ENCODE measurements at regions of chr15 and their contacts with region 1.

Region 1: DNA sequence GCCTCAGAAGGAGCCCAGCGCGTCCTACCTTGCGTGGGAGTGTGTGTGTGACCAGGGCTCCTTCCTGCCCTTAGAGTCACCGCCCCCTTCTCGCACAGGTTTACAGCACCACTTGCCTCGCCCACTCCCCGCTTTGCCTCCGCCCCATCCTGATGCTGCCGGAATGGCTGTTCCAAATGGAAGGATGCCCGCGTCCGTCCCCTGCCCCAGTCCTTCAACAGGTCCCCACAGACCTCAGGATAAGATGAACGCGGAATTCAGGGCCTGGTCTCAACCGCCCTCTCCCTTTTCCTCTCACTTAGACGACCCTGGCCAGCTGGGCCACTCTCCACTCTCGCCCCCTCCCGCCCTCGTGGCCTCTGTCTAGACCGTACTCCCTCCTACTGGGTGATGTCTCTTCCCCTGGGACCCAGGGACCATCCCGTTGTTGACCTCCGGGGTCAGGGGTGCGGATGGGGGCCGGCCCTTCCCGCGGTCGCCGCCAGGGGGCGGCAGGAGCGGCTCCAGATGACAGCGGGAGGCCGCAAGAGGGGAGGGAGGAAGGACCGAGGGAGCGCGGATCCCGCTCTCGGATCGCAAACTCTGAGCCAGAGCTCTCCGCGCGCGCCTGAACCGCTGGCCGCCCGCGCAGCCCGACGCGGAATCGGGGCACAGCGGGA is at the start of gene THSD4:
- DNase-seq: peak; percentile 75 to 92
- ATAC-seq: peak; percentile 84
- H3K4me3 ChIP-seq: peak within 1 kb of the TSS; percentile 48 to 91
- H3K27ac ChIP-seq: peak within 1 kb of the TSS; percentile 82 to 83
- H3K4me1 ChIP-seq: peaks cover 0 to 1% of the 10 kb centered on the region in 2 donors
- H3K27me3 ChIP-seq: no peaks in the 10 kb centered on the region
- total RNA-seq, gene THSD4: 53.8 to 143 TPM

Region 2: GRCh38 chr15:70792171-70792573 is 322.9 kb before region 1 on chr15:
- intact Hi-C with region 1: no loop called
- DNase-seq: no peak
- ATAC-seq: no peak
- H3K4me3 ChIP-seq: no peak overlapping the region
- H3K27ac ChIP-seq: no peak overlapping the region
- H3K4me1 ChIP-seq: no peaks in the 10 kb centered on the region
- H3K27me3 ChIP-seq: no peaks in the 10 kb centered on the region

Region 3: DNA sequence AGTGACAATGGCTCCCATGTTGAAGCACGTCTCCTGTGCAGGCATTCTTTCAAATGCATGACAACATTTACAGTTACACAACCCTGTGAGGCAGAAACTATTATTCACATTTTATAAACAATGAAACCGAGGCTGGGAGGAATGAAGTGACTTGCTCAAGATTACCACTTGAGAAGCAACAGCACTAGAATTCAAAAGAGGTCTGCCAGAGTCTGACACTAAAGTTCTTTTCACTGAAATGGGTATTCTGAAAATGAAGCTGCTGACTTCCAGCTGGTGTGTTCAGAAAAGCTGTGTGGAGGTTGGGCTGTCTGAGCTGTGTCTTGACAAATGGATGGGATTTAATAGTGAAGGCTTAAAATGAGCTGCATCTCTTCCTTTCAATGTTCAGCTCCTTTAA is 104.6 kb after region 1 on chr15:
- intact Hi-C with region 1: loop called (anchors 5 kb)
- DNase-seq: no peak
- ATAC-seq: peak; percentile 34
- H3K4me3 ChIP-seq: no peak overlapping the region
- H3K27ac ChIP-seq: peak overlapping the region in 1 of 2 donors; percentile 81
- H3K4me1 ChIP-seq: peaks cover 5% of the 10 kb centered on the region in 2 donors
- H3K27me3 ChIP-seq: no peaks in the 10 kb centered on the region

Region 4: DNA sequence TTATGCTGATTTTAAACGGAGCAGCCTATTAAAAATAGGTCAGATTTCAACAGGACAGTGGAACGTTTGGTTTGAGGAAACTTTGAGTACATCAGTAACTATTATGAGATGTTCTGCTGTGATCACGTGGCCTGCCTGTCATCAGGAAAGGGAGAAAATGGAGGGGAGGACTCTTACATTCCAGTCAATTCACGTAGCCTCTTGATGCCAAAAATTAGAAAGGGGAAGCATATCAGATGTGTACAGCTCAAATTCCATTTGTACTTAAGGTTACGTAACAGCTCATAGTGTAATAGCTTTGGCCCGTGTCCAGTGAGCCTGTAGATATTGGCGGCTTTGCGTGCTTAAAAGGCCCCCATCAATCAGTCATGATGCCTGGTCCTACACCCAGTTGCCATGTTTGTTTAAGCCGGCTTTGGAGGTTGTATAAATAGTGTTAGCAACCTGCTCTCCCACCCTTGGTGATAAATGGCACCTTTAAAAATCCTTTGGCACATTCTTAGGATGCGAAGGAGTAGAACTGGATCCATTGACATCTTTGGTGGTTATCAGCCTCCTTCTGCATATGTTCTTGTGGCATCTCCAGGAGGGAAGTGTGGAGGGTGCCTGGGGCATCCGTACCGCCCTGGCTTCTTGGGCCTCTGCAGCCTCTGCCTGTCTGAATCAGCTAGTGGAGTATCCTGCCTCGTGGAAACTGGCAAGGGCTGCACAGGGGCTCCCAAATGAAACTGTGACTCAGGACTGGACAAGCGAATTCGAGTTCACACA is 164.1 kb after region 1 on chr15:
- intact Hi-C with region 1: loop called (anchors 5 kb)
- DNase-seq: peak; percentile 77 to 85
- ATAC-seq: peak; percentile 83
- H3K4me3 ChIP-seq: no peak overlapping the region
- H3K27ac ChIP-seq: peak overlapping the region; percentile 72 to 89
- H3K4me1 ChIP-seq: peaks cover 5 to 14% of the 10 kb centered on the region in 2 donors
- H3K27me3 ChIP-seq: no peaks in the 10 kb centered on the region

Region 5: GRCh38 chr15:71329497-71330260 is 214.7 kb after region 1 on chr15:
- intact Hi-C with region 1: loop called (anchors 5 to 10 kb)
- DNase-seq: peak in 1 of 2 donors; percentile 57
- ATAC-seq: peak; percentile 80
- H3K4me3 ChIP-seq: no peak overlapping the region
- H3K27ac ChIP-seq: peak overlapping the region; percentile 98
- H3K4me1 ChIP-seq: peaks cover 5 to 14% of the 10 kb centered on the region in 2 donors
- H3K27me3 ChIP-seq: no peaks in the 10 kb centered on the region

Region 6: DNA sequence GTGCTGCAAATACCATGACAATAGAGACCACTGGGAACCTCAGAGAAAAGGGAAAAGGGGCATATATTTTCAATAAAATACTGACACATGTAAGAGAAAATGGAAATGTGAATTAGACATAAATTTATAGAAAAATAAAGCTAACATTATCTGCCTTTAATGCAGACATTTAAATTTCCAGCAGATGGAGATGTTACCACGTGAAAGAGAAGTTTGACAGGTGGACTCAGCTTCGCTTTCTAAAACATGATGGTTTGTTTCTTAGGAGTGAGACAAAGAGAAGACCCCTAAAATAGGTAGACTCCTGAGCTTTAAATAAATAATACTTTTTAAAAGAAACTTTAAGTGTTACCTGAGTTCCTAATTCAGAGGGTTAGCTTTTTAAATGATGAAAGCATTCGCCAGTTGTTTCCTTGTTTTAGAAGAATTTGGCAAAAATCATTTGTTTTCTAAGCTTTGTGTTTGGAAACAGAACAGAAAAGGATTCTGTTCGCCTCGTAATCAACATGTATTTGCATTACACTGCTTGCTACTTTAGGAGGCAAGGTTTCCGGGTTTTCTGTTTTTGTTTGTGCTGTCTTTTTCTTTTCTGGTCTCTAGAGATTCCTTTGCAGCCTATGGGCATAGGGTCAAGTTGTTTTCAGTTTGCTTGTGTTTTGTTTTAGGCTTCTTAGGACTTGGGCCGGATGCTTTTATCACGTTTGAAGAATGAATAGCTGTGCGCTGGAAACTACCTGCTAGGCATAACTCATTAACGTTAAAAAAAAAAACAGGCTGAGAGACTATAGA is 271.6 kb after region 1 on chr15:
- intact Hi-C with region 1: loop called in 1 of 2 experiments (anchors 5 kb)
- DNase-seq: no peak
- ATAC-seq: no peak
- H3K4me3 ChIP-seq: no peak overlapping the region
- H3K27ac ChIP-seq: no peak overlapping the region
- H3K4me1 ChIP-seq: peaks cover 1 to 12% of the 10 kb centered on the region in 2 donors
- H3K27me3 ChIP-seq: no peaks in the 10 kb centered on the region

Region 7: GRCh38 chr15:71443538-71443937 is 328.5 kb after region 1 on chr15:
- intact Hi-C with region 1: loop called in 1 of 2 experiments (anchors 2 kb)
- DNase-seq: peak; percentile 66 to 87
- ATAC-seq: no peak
- H3K4me3 ChIP-seq: no peak overlapping the region
- H3K27ac ChIP-seq: no peak overlapping the region
- H3K4me1 ChIP-seq: peaks cover 0 to 8% of the 10 kb centered on the region in 2 donors
- H3K27me3 ChIP-seq: no peaks in the 10 kb centered on the region